Esophagus squamous epithelium (tissue), 5 donors: ENCODE measurements at regions of chr14 and their contacts with region 1.

Region 1: DNA sequence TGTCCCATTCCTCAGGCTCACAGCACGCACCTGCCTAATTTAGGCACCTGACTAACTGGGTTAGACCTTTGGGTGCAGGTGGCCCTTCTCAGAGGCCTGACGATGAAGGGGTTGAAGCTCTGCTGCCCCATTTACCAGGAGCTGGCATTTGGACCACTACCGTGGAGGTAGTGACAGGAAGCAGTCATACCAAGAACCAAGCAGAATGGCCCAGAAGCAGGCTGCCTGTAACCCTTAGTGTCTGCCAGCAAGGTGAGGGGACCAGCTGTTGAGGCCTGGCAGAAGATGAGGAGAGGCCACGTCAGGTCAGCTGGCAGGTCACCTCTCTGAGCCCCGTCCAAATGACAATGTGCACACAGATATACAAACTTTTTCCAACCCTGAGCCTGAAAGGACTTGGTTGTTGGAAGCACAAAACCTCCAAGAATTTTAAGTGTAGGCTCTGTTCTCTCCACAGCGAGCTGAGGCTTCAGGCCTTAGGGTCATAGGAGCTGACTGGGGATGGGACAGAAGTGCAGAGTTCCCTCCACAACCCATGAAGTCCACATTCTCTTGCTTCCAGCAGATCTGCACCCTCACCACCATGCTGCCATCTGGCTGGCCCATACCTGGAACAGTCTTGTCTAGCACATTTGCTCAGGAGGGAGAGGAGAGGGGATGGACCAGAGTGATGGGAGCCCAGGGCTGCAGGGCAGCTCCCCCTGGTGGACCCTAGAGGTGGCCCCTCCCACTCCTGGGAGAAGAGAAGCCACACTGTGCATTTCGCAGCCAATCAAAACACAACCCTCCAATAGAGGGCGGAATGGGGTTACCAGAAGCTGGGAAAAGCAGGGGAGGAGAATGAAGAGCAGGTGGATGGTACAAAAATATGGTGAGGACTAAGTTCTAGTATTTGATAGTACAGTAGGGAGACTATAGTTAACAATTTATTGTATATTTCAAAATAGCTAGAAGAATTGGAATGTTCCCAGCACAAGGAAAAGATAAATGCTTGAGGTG is 23.3 kb downstream of the VASH1 start:
- DNase-seq: no peak
- H3K4me3 ChIP-seq: no peak overlapping the region
- H3K27ac ChIP-seq: no peak overlapping the region
- H3K4me1 ChIP-seq: peaks cover 4 to 29% (median 10%) of the 10 kb centered on the region in 3 donors
- H3K27me3 ChIP-seq: no peaks in the 10 kb centered on the region
- CTCF ChIP-seq: peak in 5 of 6 experiments; percentile 56 to 79 (median 62)
- POLR2A ChIP-seq: no peak

Region 2: DNA sequence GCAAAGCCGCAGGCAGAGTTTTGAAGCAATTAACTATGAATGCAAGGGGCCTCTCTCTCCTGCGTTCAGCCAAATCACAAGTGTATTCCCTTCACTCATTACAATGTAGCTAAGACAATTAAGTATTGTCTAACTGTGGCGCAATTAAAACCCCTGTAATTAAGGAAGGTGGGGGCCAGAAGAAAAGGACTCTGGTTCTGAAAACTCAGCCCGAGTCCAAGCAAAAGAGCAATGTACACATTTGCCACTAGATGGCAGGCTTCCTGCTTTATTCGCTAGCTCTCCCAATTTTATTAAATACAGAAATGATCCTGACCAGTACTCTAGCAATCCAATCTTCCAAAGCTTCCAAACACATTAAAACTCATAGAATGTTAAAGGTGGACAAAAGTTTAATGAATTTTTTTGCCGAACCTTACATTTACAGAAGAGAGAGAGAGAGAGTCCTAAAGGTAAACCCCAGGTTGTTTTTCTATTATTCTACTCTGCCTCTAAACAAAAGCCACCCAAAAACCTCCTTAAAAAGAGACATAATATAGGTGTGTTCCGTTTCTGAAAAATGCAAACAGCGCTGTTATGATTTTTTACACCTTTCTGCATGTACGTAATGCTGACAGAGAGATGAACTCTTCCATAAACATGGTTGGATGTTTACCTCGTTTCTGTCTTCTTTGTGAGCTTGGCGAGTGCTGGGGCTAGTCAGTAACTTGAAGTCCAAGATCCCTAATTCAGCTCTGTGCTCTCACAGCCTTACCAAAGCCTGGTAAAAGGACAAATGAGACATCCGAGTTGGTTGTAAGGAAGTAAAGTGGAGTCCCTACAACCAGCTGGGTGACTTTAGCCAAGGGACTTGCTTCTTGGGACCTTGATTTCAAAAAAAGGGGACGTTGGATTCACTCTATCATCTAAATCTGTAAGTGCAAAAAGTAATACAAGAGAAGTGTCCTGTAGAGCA is 74.2 kb before region 1 on chr14:
- intact Hi-C with region 1: loop called (anchors 10 kb)
- DNase-seq: no peak
- H3K4me3 ChIP-seq: no peak overlapping the region
- H3K27ac ChIP-seq: no peak overlapping the region
- H3K4me1 ChIP-seq: no peaks in the 10 kb centered on the region
- H3K27me3 ChIP-seq: peaks cover 0 to 3% (median 0%) of the 10 kb centered on the region in 4 donors
- CTCF ChIP-seq: peak; percentile 49 to 82 (median 70)
- POLR2A ChIP-seq: no peak